Ovary (tissue), 10 donors: ENCODE measurements at regions of chr2 and their contacts with region 1.

Region 1: GRCh38 chr2:46296840-46297545 is at the start of gene EPAS1:
- DNase-seq: peak; percentile 88 to 95 (median 94)
- H3K4me3 ChIP-seq: peak within 1 kb of the TSS; percentile 73
- H3K27ac ChIP-seq: peak within 1 kb of the TSS; percentile 80 to 92
- H3K4me1 ChIP-seq: peaks cover 6% of the 10 kb centered on the region
- H3K27me3 ChIP-seq: no peaks in the 10 kb centered on the region
- CTCF ChIP-seq: no peak
- EP300 ChIP-seq: no peak
- POLR2A ChIP-seq: peak; percentile 63
- total RNA-seq, gene EPAS1: 63.1 to 163 (median 81.0) TPM

Region 2: GRCh38 chr2:46062637-46063412 is 234.2 kb before region 1 on chr2:
- intact Hi-C with region 1: loop called in 1 of 4 experiments (anchors 10 kb)
- DNase-seq: peak; percentile 72 to 90 (median 77)
- H3K4me3 ChIP-seq: no peak overlapping the region
- H3K27ac ChIP-seq: no peak overlapping the region
- H3K4me1 ChIP-seq: peaks cover 1% of the 10 kb centered on the region
- H3K27me3 ChIP-seq: no peaks in the 10 kb centered on the region
- CTCF ChIP-seq: peak; percentile 75 to 88 (median 77)
- EP300 ChIP-seq: no peak
- POLR2A ChIP-seq: no peak

Region 3: GRCh38 chr2:46335391-46336282 is 38.6 kb after region 1 on chr2:
- intact Hi-C with region 1: loop called in 2 of 4 experiments (anchors 2 kb)
- DNase-seq: peak; percentile 55 to 71 (median 63)
- H3K4me3 ChIP-seq: peak overlapping the region; percentile 8
- H3K27ac ChIP-seq: peak overlapping the region; percentile 81 to 87
- H3K4me1 ChIP-seq: peaks cover 54% of the 10 kb centered on the region
- H3K27me3 ChIP-seq: no peaks in the 10 kb centered on the region
- CTCF ChIP-seq: no peak
- EP300 ChIP-seq: no peak
- POLR2A ChIP-seq: no peak

Region 4: DNA sequence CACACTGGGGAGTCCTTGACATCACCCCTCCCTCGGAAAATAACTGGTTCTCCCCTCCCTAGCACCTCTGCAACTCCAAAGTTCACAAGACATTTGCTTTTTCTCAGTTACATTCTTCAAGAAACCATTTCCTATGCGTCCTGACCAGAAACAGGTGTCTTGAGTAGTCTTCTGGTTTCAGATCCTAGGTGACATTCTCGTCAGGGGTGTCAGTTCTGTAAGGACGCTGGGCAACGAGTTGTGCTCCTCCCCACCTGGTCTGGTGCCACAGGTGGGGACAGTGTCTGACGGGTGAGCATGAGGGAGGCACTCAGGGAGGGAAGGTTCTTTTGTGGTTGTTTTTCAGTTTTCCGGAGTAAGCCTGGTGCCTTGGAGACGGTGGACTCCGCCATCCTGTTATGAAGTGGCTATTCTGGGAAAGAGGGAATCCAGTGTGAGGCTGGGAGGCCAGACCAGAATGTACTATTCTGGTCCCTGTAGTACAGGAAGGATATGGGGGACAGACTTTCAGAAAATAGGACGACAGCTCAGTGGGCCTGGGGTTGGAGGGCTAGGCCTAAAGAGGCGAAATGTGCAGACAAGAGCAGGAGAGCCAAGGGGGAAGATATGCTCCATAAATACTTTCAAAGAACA is 50.8 kb after region 1 on chr2:
- intact Hi-C with region 1: loop called in 1 of 4 experiments (anchors 5 kb)
- DNase-seq: no peak
- H3K4me3 ChIP-seq: no peak overlapping the region
- H3K27ac ChIP-seq: no peak overlapping the region
- H3K4me1 ChIP-seq: peaks cover 12% of the 10 kb centered on the region
- H3K27me3 ChIP-seq: no peaks in the 10 kb centered on the region
- CTCF ChIP-seq: no peak
- EP300 ChIP-seq: no peak
- POLR2A ChIP-seq: no peak